ENCODE measurements at regions of chr7 and their contacts with region 1.

Region 1: DNA sequence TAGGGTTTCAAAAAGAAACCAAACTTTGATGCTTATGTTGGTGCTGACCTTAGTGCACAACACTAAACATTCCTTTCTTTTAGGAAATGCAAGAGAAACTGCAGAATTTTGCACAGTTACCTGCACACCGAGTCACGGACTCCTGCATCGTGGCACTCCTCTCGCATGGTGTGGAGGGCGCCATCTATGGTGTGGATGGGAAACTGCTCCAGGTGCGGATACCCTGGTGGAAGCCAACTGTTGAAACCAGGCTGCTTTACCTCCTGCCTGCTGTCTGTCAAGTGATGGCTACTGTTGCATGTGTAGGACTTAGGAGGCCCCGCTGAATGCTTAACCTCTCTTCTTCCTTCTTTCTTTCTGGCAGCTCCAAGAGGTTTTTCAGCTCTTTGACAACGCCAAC is 11.7 kb downstream of the CASP2 start:
- DNase-seq: peak; percentile 77
- H3K4me3 Mint-ChIP-seq: no peak overlapping the region
- H3K27ac Mint-ChIP-seq: peak overlapping the region; percentile 31
- H3K4me1 Mint-ChIP-seq: peaks cover 73% of the 10 kb centered on the region
- H3K27me3 Mint-ChIP-seq: no peaks in the 10 kb centered on the region

Region 2: DNA sequence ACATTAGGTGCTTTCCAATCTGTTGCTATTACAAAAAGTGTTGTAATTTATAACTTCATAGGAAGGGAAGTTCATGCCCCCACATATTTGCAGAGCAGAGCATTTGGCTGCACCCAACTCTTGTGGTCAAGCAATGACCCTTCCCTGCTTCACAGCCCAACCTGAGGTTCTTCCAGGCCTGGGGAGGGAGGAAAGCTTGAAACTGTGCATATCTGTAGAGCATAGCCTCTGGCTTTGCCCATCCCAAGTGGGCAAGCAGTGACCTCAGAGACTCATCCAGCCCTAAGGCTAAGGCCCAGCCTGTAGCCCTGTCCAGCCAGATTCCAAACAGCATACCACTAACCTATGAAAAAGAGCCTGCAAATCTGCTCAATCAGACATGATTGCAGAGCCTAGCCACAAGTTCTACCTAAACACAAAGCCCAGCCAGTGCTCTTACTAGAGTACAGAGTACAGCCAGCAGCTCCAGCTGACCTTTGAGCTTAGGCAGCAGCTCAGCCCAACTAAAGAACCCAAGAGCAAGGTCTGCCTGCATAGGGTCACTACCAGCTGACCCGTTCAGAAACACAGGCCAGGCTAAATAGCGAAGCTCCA is 51.0 kb before region 1 on chr7:
- CTCF ChIA-PET with region 1: interaction called, 185 read pairs
- DNase-seq: no peak
- H3K4me3 Mint-ChIP-seq: no peak overlapping the region
- H3K27ac Mint-ChIP-seq: peak overlapping the region; percentile 30
- H3K4me1 Mint-ChIP-seq: peaks cover 90% of the 10 kb centered on the region
- H3K27me3 Mint-ChIP-seq: no peaks in the 10 kb centered on the region

Region 3: DNA sequence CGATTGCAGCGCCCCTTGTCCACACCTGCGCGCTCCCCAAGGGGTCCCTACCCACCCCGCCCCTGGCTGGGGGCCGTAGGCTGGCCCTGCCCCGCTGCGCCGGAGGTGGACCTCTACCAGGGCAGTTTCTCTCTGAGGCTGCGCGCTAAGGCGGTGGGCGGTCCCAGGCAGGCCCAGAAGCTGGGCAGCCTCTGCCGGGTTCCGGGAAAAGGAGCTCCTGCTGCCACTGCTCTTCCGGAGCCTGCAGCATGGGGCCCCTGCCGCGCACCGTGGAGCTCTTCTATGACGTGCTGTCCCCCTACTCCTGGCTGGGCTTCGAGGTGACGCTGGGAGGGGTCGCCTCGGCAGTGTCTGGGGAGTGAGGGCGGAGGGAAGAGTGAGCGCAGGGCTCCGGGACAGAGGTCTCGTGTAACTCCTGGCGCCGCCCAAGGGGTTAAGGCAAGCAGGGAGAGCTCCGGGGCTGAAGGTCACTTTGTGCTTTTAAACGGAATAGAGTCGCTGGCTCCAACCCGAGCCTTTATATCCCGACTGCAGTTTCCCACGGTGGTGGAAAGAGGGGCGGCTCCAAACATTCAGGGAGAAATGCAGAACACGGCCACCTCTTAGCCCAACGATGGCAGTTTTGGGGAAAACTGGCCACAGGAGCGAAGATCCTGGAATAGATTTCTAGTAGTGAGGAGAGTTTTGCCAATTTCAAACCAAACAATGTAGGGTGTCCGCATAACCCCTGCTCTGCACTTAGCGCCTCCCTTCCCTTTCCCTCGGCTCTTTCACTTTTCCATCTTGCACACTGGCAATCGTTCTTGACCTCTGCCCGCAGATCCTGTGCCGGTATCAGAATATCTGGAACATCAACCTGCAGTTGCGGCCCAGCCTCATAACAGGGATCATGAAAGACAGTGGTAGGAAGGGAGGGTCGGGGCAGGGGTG is 36.3 kb before region 1 on chr7 and contains the start of gene GSTK1:
- CTCF ChIA-PET with region 1: interaction called, 10 read pairs
- DNase-seq: peak; percentile 89
- H3K4me3 Mint-ChIP-seq: peak within 1 kb of the TSS; percentile 87
- H3K27ac Mint-ChIP-seq: peak within 1 kb of the TSS; percentile 93
- H3K4me1 Mint-ChIP-seq: peaks cover 85% of the 10 kb centered on the region
- H3K27me3 Mint-ChIP-seq: no peaks in the 10 kb centered on the region

Region 4: GRCh38 chr7:143287935-143288826 is 11.7 kb before region 1 on chr7 and contains the start of gene CASP2:
- CTCF ChIA-PET with region 1: interaction called, 22 read pairs
- DNase-seq: peak; percentile 99
- H3K4me3 Mint-ChIP-seq: peak within 1 kb of the TSS; percentile 97
- H3K27ac Mint-ChIP-seq: peak within 1 kb of the TSS; percentile 93
- H3K4me1 Mint-ChIP-seq: peaks cover 71% of the 10 kb centered on the region
- H3K27me3 Mint-ChIP-seq: peaks cover 4% of the 10 kb centered on the region

Region 5: DNA sequence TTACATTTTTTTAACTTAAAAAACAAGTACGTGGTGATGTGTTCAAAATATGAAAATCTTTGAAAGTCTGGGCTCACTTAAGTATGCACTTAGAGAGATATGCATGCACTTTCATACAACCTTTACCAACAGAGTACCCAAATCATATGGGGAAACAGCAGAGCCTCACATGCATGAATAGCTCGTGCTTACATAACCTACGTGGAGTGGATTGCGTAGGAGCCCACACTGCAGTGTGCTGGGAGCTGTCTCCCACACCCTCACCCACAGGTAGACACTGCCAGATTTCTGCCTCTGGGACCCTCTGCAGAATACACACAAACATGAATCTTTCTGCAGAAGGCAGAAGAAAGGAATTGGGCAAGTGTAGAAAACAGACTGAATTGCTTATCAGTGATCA is 16.7 kb after region 1 on chr7:
- CTCF ChIA-PET with region 1: interaction called, 11 read pairs
- DNase-seq: no peak
- H3K4me3 Mint-ChIP-seq: no peak overlapping the region
- H3K27ac Mint-ChIP-seq: no peak overlapping the region
- H3K4me1 Mint-ChIP-seq: peaks cover 9% of the 10 kb centered on the region
- H3K27me3 Mint-ChIP-seq: peaks cover 36% of the 10 kb centered on the region

Region 6: DNA sequence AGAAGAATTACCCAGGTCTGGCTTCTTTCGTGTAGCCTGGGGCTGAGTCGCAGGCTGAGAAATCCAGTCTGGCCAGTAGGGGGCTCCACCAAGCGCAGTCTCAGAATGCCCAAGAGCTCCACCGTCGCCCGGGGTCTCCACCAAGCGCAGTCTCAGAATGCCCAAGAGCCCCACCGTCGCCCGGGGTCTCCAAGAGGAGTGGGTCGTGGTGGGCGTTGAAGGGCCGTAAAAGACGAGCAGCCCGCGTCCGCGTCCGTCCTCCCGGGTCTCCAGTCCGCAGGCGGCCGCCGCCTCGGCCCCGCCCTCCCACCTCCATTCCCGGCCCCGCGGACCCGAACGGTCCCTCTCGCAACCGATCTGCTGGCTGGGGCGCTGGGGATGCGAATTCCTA is 80.4 kb after region 1 on chr7:
- CTCF ChIA-PET with region 1: interaction called, 10 read pairs
- DNase-seq: peak; percentile 91
- H3K4me3 Mint-ChIP-seq: peak overlapping the region; percentile 78
- H3K27ac Mint-ChIP-seq: peak overlapping the region; percentile 91
- H3K4me1 Mint-ChIP-seq: peaks cover 44% of the 10 kb centered on the region
- H3K27me3 Mint-ChIP-seq: no peaks in the 10 kb centered on the region

Measured in activated naive CD4-positive, alpha-beta T cell treated with anti-CD3 and anti-CD28 coated beads, Interleukin-2, amount 10 ng/mL, durations not matched to agents 7 days and 5 days (primary cell).